Caco-2 (cell line): ENCODE measurements at regions of chr17 and their contacts with region 1.

Region 1: DNA sequence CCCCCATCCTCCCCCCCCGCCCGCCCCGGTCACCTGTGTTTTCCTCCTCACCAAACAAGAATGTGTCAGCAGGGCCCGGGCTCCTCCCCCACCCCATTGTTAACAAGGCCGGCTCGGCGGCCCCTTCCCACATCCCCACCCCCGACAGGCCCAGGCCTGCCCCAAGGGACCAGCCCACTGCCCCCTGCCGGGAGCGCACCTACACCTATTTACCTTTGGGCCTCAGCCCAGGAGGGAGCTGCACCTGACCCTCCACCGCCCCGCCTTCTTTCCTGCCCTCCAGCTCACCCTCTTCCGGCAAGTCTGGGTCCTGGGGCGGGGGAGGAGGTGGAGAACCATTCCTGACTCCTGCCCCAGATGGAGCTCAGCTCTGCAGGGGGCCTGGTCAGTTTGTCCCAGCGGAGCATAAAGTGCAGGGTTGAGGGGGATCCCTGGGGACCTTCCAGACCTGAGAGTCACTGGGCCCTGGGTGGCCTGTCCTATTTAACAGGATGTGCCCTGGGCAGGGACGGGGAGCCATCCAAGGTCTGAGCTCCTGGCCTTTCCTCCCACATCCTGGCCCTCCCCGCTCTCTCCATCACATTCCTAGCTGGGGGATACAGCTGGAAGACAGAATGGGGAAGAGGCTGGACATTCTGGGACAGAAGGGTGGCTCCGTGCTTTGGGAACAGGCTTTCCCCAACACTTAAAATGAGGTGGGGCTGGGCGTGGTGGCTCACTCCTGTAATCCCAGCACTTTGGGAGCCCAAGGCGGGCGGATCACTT is 8.3 kb downstream of the FOXJ1 start:
- DNase-seq: peak; percentile 99 to 100
- H3K4me3 ChIP-seq: no peak overlapping the region
- H3K4me3 Mint-ChIP-seq: peak overlapping the region; percentile 52
- H3K27ac Mint-ChIP-seq: peak overlapping the region; percentile 85
- H3K4me1 ChIP-seq: peaks cover 77% of the 10 kb centered on the region
- H3K4me1 Mint-ChIP-seq: peaks cover 61% of the 10 kb centered on the region
- H3K27me3 ChIP-seq: no peaks in the 10 kb centered on the region
- H3K27me3 Mint-ChIP-seq: no peaks in the 10 kb centered on the region
- CTCF ChIP-seq: peak; percentile 56 to 79

Region 2: DNA sequence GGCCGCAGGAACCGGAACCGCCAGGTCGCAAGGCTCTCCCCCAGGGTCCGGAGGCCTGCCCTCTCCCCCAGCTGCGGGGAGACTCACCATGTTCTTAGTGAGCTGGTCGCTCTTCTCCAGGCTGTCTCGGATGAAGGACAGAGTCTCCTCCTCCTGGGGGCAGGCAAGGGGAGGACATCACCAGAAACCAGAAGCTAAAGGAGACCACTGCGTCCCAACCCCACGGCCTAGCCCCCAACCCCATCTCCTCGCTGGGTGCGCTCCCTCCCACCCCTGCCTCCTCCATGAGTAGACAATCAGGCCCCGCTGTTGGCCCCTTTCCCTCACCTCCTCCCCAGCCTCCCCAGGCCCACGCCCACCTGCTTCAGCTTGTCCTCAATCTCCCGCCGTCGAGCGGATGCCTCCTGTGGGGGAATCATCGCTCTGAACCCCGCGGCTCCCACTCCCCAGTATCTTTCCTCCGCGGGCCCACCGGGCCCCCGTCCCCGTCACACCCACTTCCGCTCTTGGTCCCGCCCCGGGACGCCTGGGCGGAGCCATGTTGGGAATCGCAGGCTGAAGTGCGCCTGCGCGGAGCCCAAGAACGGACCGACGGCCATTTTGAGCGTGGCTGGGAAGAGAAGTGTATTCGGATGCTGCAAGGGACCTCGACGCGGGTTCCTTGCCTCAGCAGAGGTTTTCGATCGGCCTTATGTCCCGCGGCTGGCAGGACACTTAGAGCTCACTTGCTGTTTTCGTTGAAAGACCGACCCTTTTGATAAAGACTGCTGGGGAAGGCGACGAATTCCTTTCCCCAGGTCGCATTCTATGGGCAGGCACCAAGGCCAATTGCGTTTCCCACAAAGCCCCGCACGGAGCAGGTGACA is 29.2 kb before region 1 on chr17 and contains the start of gene EXOC7:
- CTCF ChIA-PET with region 1: interaction called, 17 read pairs
- POLR2A ChIA-PET with region 1: interaction called, 21 read pairs
- intact Hi-C with region 1: loop called (anchors 2 kb)
- DNase-seq: peak; percentile 92 to 96
- H3K4me3 ChIP-seq: peak within 1 kb of the TSS; percentile 82
- H3K4me3 Mint-ChIP-seq: peak within 1 kb of the TSS; percentile 92
- H3K27ac Mint-ChIP-seq: peak within 1 kb of the TSS; percentile 91
- H3K4me1 ChIP-seq: peaks cover 28% of the 10 kb centered on the region
- H3K4me1 Mint-ChIP-seq: peaks cover 9% of the 10 kb centered on the region
- H3K27me3 ChIP-seq: no peaks in the 10 kb centered on the region
- H3K27me3 Mint-ChIP-seq: no peaks in the 10 kb centered on the region
- CTCF ChIP-seq: no peak
- total RNA-seq, gene EXOC7: 205 TPM in 2 replicates

Region 3: DNA sequence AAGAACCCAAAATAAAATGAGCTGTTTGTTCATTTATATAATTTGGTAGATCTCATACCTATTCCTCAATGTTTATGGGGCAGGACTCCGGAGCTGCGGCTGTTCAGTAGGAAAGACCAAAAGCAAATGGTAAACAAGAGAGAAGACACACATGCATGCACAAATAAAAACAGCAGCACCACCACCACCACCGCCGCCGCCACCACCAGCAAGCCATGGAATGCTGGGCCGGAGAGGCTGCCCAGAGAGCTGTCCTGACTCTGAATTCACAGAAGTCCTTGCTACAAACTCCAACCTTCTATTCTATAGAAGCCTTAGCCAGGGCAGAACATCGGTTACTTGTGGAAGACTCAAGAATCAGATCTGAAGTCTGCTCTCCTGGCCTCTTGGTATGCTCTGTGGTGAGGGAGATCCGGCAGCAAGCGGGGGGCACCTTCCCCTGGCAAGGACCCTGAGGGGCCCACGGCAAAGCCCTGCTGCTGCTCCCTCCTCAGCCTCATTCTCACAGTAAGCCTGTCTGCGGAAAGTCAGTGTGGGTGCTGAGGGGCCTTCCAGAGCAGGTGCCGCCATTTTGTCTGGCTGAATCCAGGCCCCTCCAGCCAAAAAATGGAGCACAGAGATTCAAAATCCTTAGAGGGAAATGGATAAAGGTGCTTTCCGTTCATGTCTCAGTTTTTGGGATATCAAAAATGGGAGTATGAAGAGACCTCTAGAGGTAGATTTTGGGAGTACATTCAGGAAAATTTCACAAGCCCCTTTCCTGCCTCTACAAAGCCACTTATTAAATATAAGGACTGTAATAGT is 14.7 kb after region 1 on chr17:
- CTCF ChIA-PET with region 1: interaction called, 57 read pairs
- POLR2A ChIA-PET with region 1: interaction called, 31 read pairs
- intact Hi-C with region 1: loop called (anchors 1 kb)
- DNase-seq: peak in 1 of 2 experiments; percentile 57
- H3K4me3 ChIP-seq: no peak overlapping the region
- H3K4me3 Mint-ChIP-seq: no peak overlapping the region
- H3K27ac Mint-ChIP-seq: no peak overlapping the region
- H3K4me1 ChIP-seq: peaks cover 7% of the 10 kb centered on the region
- H3K4me1 Mint-ChIP-seq: peaks cover 12% of the 10 kb centered on the region
- H3K27me3 ChIP-seq: no peaks in the 10 kb centered on the region
- H3K27me3 Mint-ChIP-seq: no peaks in the 10 kb centered on the region
- CTCF ChIP-seq: peak; percentile 63

Region 4: DNA sequence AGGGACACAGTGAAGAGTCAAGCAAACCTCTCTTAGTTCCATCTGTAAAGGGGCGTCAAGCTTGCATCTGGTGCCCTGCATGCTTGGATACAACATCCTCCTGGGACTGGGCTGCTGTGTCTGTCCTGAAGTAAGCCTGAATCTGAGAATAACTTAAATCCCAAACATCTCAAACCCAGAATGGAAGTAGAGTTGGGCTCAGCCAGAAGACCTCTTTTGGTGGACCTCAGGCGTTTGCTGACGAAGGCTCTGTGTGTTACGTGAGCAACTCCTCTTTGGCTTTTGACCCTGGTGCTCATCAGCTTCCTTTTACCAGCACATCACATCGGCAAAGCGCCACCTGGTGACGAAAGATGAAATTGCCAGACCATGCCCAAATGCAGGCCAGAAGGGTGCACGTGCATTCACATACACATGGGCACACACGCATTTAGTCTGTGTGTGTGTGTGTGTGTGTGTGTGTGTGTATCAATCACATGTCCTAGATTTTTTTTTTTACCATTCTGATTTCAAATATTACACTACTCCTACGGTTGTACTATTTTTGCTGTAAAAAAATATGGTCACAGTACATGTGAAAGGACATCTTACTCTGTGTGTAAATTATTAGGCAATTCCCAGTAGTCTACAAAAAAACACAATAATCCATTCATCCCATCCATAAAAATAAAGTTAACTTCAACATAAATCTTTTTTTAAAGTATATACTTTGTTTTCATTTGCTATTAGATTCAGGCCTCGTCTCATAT is 49.4 kb after region 1 on chr17:
- CTCF ChIA-PET with region 1: interaction called, 11 read pairs
- POLR2A ChIA-PET with region 1: no interaction called
- intact Hi-C with region 1: no loop called
- DNase-seq: peak; percentile 89 to 93
- H3K4me3 ChIP-seq: no peak overlapping the region
- H3K4me3 Mint-ChIP-seq: no peak overlapping the region
- H3K27ac Mint-ChIP-seq: no peak overlapping the region
- H3K4me1 ChIP-seq: peaks cover 7% of the 10 kb centered on the region
- H3K4me1 Mint-ChIP-seq: peaks cover 6% of the 10 kb centered on the region
- H3K27me3 ChIP-seq: no peaks in the 10 kb centered on the region
- H3K27me3 Mint-ChIP-seq: no peaks in the 10 kb centered on the region
- CTCF ChIP-seq: peak; percentile 88 to 90

Region 5: GRCh38 chr17:76309461-76309860 is 176.7 kb after region 1 on chr17:
- CTCF ChIA-PET with region 1: no interaction called
- POLR2A ChIA-PET with region 1: no interaction called
- intact Hi-C with region 1: no loop called
- DNase-seq: no peak
- H3K4me3 ChIP-seq: no peak overlapping the region
- H3K4me3 Mint-ChIP-seq: no peak overlapping the region
- H3K27ac Mint-ChIP-seq: no peak overlapping the region
- H3K4me1 ChIP-seq: no peaks in the 10 kb centered on the region
- H3K4me1 Mint-ChIP-seq: no peaks in the 10 kb centered on the region
- H3K27me3 ChIP-seq: no peaks in the 10 kb centered on the region
- H3K27me3 Mint-ChIP-seq: no peaks in the 10 kb centered on the region
- CTCF ChIP-seq: no peak